Left cardiac atrium (tissue), 4 donors: ENCODE measurements at regions of chr3 and their contacts with region 1.

Region 1: GRCh38 chr3:126522363-126522788 is 1.6 kb upstream of the CHST13 start:
- DNase-seq: peak; percentile 54
- ATAC-seq: peak in 1 of 2 donors; percentile 17

Region 2: GRCh38 chr3:126714276-126714900 is 192.0 kb after region 1 on chr3:
- intact Hi-C with region 1: no loop called
- DNase-seq: no peak
- ATAC-seq: no peak

Region 3: GRCh38 chr3:127455541-127456450 is 933.4 kb after region 1 on chr3:
- intact Hi-C with region 1: loop called in 1 of 2 experiments (anchors 10 kb)
- DNase-seq: peak; percentile 72
- ATAC-seq: peak; percentile 92 to 93

Region 4: GRCh38 chr3:127544192-127544802 is 1021.9 kb after region 1 on chr3:
- intact Hi-C with region 1: loop called (anchors 10 kb)
- DNase-seq: peak; percentile 80
- ATAC-seq: peak in 1 of 2 donors; percentile 48